Endothelial cell of umbilical vein (primary cell): ENCODE measurements at regions of chr11 and their contacts with region 1.

Region 1: GRCh38 chr11:133064152-133064877 is 468.0 kb downstream of the OPCML start:
- DNase-seq: peak; percentile 48
- H3K4me3 ChIP-seq: peak overlapping the region; percentile 14 to 64 (median 42)
- H3K27ac ChIP-seq: peak overlapping the region; percentile 12
- H3K4me1 ChIP-seq: peaks cover 8% of the 10 kb centered on the region
- H3K27me3 ChIP-seq: no peaks in the 10 kb centered on the region
- CTCF ChIP-seq: peak; percentile 63 to 68
- POLR2A ChIP-seq: no peak

Region 2: GRCh38 chr11:131688051-131688698 is 1376.1 kb before region 1 on chr11:
- CTCF ChIA-PET with region 1: interaction called, 23 read pairs
- POLR2A ChIA-PET with region 1: no interaction called
- dilution Hi-C with region 1: no loop called
- intact Hi-C with region 1: loop called (anchors 1 kb)
- DNase-seq: peak; percentile 54
- H3K4me3 ChIP-seq: no peak overlapping the region
- H3K27ac ChIP-seq: no peak overlapping the region
- H3K4me1 ChIP-seq: no peaks in the 10 kb centered on the region
- H3K27me3 ChIP-seq: peaks cover 0 to 2% of the 10 kb centered on the region in 2 experiments
- CTCF ChIP-seq: peak; percentile 90 to 95
- POLR2A ChIP-seq: no peak

Region 3: GRCh38 chr11:132114185-132114584 is 950.1 kb before region 1 on chr11:
- CTCF ChIA-PET with region 1: interaction called, 3 read pairs
- POLR2A ChIA-PET with region 1: no interaction called
- dilution Hi-C with region 1: no loop called
- intact Hi-C with region 1: loop called (anchors 1 kb)
- DNase-seq: peak; percentile 44
- H3K4me3 ChIP-seq: no peak overlapping the region
- H3K27ac ChIP-seq: no peak overlapping the region
- H3K4me1 ChIP-seq: peaks cover 9% of the 10 kb centered on the region
- H3K27me3 ChIP-seq: no peaks in the 10 kb centered on the region
- CTCF ChIP-seq: peak in 1 of 2 donors; percentile 53
- POLR2A ChIP-seq: no peak

Region 4: GRCh38 chr11:132941024-132941646 is 123.2 kb before region 1 on chr11:
- CTCF ChIA-PET with region 1: interaction called, 7 read pairs
- POLR2A ChIA-PET with region 1: no interaction called
- dilution Hi-C with region 1: no loop called
- intact Hi-C with region 1: loop called (anchors 5 kb)
- DNase-seq: peak; percentile 19
- H3K4me3 ChIP-seq: no peak overlapping the region
- H3K27ac ChIP-seq: no peak overlapping the region
- H3K4me1 ChIP-seq: no peaks in the 10 kb centered on the region
- H3K27me3 ChIP-seq: peaks cover 10 to 17% of the 10 kb centered on the region in 2 experiments
- CTCF ChIP-seq: peak; percentile 67 to 71
- POLR2A ChIP-seq: no peak

Region 5: GRCh38 chr11:132972565-132972964 is 91.8 kb before region 1 on chr11:
- CTCF ChIA-PET with region 1: no interaction called
- POLR2A ChIA-PET with region 1: no interaction called
- dilution Hi-C with region 1: no loop called
- intact Hi-C with region 1: no loop called
- DNase-seq: no peak
- H3K4me3 ChIP-seq: no peak overlapping the region
- H3K27ac ChIP-seq: no peak overlapping the region
- H3K4me1 ChIP-seq: no peaks in the 10 kb centered on the region
- H3K27me3 ChIP-seq: no peaks in the 10 kb centered on the region
- CTCF ChIP-seq: no peak
- POLR2A ChIP-seq: no peak